ENCODE measurements at regions of chr19 and their contacts with region 1.

Region 1: DNA sequence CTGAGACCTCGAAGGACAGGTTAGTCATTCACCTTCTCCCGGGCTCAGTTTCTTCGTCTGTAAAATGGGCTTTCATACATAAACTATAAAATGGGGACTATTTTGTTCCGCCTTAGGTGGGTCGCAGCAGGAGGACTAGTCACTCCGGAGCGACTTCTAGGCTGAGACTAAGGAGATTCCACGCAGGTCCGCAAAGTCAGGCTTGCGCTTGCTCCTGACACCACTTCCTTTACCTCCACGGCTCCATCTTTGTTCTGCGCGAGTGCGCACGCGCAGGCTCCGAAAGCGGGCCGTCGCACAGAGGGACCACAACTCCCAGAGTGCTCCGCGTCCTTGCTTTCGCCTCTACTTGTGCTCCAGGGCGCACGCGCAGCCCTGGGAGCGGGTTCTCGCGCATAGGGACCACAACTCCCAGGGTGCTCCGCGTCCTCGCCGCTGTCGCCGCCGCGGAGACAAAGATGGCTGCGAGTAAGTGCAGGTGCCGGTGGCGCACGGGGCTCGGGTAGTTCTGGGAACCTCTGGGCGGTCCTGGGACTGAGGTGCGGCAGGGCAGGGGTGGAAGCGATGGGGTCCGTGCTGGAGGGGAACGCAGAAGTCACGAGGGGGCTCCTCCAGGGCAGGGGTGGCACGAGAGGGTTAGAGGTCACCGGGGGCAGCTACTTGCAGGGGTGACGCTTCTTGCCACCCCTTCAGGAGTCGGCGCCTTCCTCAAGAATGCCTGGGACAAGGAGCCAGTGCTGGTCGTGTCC is at the start of gene NDUFA3:
- DNase-seq: peak; percentile 96 to 99
- H3K4me3 ChIP-seq: peak within 1 kb of the TSS; percentile 68
- H3K27ac ChIP-seq: no peak within 1 kb of the TSS
- H3K4me1 ChIP-seq: 0 out of 2 replicates have a peak, but pooled peaks cover 7% of the 10 kb centered on the region
- H3K27me3 ChIP-seq: no peaks in the 10 kb centered on the region
- CTCF ChIP-seq: no peak
- total RNA-seq, gene NDUFA3: 119 and 134 TPM in 2 replicates

Region 2: DNA sequence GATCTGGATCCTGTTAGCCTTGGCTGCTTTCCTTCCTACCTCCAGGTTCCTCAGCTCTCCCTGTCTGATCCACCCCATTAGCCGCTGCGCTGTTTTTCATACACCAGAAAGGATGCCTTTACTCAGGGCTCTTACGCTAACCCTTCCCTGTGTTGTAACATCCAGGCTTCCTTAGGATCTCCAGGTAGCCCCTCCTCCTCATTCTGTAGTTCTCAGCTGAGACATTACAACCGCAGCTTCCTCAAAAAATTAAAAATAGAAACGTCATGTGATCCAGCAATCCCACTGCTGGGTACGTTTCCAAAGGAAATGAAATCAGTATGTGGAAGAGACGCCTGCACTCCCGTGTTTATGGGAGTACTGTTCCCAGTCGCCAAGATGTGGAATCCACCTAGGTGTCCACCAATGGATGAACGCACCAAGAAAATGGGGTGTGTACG is 253.3 kb before region 1 on chr19:
- CTCF ChIA-PET with region 1: no interaction called
- POLR2A ChIA-PET with region 1: no interaction called
- intact Hi-C with region 1: loop called (anchors 5 kb)
- DNase-seq: no peak
- H3K4me3 ChIP-seq: no peak overlapping the region
- H3K27ac ChIP-seq: no peak overlapping the region
- H3K4me1 ChIP-seq: 0 out of 2 replicates have a peak, but pooled peaks cover 7% of the 10 kb centered on the region
- H3K27me3 ChIP-seq: no peaks in the 10 kb centered on the region
- CTCF ChIP-seq: no peak

Region 3: GRCh38 chr19:54115109-54116063 is 12.8 kb after region 1 on chr19 and contains the starts of genes PRPF31 and TFPT:
- CTCF ChIA-PET with region 1: no interaction called
- POLR2A ChIA-PET with region 1: interaction called, 32 read pairs
- intact Hi-C with region 1: loop called (anchors 1 kb)
- DNase-seq: peak; percentile 94 to 95
- H3K4me3 ChIP-seq: peak within 1 kb of the TSS; percentile 78
- H3K27ac ChIP-seq: peak within 1 kb of the TSS; percentile 63
- H3K4me1 ChIP-seq: peaks cover 14% of the 10 kb centered on the region
- H3K27me3 ChIP-seq: no peaks in the 10 kb centered on the region
- CTCF ChIP-seq: no peak
- total RNA-seq, gene PRPF31: 86.1 and 109 TPM in 2 replicates
- total RNA-seq, gene TFPT: 35.8 and 47.4 TPM in 2 replicates